Esophagus squamous epithelium (tissue), 5 donors: ENCODE measurements at regions of chr1 and their contacts with region 1.

Region 1: DNA sequence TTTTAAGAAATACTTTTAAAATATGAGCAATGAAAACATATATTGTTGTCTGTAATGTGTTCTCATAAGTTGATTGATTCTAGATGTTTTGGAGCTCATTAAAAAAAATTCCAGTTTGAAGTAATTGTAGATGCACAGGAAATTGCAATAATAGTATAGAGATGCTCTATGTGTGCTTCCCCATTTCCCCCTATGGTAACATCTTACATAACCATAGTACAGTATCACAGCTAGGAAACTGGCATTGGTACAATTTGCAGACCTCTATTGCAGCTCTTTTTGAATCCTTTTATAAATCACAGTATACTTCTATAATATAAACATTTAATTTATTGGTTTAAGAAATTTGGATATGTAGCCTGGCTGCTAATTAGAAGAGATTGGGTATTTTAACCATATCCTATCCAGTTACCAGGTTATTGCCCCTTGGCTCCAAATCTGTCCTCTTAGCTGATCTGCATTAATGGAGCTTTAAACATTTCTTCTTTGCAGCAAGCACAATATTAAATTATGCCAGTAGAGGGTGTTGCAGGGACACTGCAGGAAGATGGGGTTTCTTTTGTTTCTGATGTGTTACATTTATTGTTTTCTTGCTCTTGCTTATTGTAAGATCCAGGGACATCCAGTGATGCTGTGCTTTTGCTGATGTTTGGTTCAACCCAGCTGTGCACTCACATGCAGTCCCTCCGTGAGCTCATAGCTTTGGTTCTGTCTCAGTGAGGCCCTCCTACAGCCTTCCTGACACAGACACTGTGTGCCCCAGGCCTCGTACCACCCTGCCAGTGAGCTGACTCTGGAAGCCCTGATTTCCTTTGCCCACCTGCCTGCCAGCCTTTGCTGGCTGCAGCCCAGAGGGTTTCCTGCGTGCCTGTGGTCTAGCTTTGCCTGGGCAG is 103.3 kb downstream of the RABGAP1L start:
- DNase-seq: no peak
- H3K4me3 ChIP-seq: no peak overlapping the region
- H3K27ac ChIP-seq: no peak overlapping the region
- H3K4me1 ChIP-seq: no peaks in the 10 kb centered on the region
- H3K27me3 ChIP-seq: no peaks in the 10 kb centered on the region
- CTCF ChIP-seq: peak; percentile 42 to 77 (median 48)
- POLR2A ChIP-seq: no peak

Region 2: DNA sequence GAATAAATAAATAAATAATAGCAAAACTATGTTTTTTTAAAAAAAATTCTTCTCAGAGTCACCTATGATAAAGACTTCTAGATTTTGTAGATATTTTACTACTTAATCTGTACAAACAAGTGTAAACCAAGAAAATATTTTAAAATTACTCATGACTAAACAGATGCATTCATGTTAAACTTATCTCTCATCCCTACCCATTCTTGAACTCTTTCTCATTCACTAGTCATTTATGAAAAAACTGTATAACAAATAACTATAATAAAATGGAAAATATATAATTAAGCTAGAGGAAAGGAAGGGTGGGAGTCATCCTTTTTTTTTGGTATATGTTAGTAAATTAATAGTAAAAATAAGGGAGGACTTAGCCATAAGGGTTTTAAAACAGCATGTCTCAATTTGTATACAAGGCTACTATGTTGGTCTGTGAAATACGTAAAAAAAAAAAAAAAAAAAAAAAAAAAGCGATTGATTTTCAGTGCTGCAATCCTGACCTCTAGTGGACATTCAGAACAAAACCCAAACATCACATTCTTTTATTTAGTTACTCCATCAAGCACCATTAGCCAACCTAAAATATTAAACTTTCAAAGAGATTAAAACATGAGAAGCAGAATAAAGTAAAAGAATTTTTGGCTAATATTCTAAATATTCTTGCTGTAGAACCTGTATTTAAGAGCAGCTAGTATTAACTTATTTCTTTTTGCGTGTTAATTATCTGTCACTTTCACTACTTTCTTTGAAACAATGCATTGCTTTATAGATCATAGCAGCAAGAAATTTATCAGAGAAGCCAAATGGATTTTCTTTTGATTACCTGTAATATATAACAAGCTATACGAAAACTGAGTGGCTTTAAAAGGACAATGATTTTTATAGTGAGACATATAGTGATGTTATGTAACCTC is 481.3 kb after region 1 on chr1:
- intact Hi-C with region 1: loop called (anchors 5 kb)
- DNase-seq: no peak
- H3K4me3 ChIP-seq: no peak overlapping the region
- H3K27ac ChIP-seq: no peak overlapping the region
- H3K4me1 ChIP-seq: peaks cover 0 to 12% (median 0%) of the 10 kb centered on the region in 3 donors
- H3K27me3 ChIP-seq: no peaks in the 10 kb centered on the region
- CTCF ChIP-seq: peak; percentile 15 to 74 (median 48)
- POLR2A ChIP-seq: no peak